ENCODE measurements at regions of chr1 and their contacts with region 1.

Region 1: DNA sequence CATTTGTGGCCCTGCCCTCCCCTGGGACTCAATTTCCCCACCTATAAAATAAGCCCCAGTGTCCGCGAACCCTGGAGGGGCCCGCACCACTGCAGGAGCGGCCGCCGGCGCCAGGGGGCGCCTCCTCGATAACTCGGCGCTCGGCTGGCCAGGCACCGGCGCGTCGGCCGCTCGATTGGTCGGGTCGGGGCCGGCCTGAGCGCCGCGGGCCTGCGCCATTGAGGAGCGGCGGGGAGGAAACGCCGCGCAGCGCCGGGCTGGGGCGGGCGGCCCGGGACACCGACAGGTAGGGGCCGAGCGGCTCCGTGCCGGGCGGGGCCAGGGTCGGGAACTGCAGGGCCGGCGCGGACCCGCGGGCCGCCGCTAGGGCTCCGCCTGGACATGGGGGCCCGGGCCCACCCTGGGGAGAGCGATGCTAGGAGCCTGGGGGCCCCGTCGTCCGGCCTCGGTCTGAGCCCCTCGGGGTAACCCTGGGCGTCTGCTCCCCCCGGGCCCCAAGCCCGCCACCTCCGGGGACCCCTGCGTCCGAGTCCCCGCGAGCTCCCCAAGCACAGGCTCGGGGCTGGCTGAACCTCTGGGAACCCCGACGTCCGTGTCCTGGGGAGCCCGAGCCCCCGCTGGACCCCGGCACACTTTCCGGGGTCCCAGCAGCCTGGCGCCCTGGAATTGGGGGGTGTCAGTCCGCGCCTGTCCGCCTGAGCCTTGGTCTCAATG is at the start of gene VPS13D:
- DNase-seq: peak; percentile 82
- ATAC-seq: peak; percentile 83
- H3K4me3 ChIP-seq: peak within 1 kb of the TSS; percentile 100
- H3K27ac ChIP-seq: peak within 1 kb of the TSS; percentile 15; the same call in 1 of the 2 replicates
- H3K4me1 ChIP-seq: peaks cover 18% of the 10 kb centered on the region
- H3K27me3 ChIP-seq: no peaks in the 10 kb centered on the region
- CTCF ChIP-seq: peak; percentile 78
- total RNA-seq, gene VPS13D: 30.7 and 43.6 TPM in 2 replicates

Region 2: DNA sequence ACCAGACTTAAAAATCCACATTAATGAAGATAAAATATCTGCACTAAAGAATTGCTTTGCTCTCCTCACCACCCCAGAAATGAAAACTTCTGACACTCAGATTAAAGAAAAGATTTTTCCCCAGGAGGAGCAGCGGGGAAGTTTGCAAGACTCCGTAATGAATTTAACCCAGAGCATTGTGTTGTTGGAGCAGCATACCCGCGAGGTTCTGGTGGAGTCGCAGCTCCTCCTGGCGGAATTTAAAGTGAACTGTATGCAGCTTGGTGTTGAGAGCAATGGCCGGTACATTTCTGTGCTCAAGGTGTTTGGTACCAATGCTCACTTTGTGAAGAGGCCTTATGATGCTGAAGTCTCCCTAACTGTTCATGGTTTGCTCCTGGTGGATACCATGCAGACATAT is 46.2 kb after region 1 on chr1:
- CTCF ChIA-PET with region 1: no interaction called
- POLR2A ChIA-PET with region 1: no interaction called
- intact Hi-C with region 1: loop called (anchors 1 kb)
- DNase-seq: peak; percentile 53
- ATAC-seq: peak; percentile 52; the same call in 1 of the 2 replicates
- H3K4me3 ChIP-seq: no peak overlapping the region
- H3K27ac ChIP-seq: no peak overlapping the region
- H3K4me1 ChIP-seq: no peaks in the 10 kb centered on the region
- H3K27me3 ChIP-seq: no peaks in the 10 kb centered on the region
- CTCF ChIP-seq: peak; percentile 65